Heart left ventricle (tissue), 16 donors: ENCODE measurements at regions of chr5 and their contacts with region 1.

Region 1: DNA sequence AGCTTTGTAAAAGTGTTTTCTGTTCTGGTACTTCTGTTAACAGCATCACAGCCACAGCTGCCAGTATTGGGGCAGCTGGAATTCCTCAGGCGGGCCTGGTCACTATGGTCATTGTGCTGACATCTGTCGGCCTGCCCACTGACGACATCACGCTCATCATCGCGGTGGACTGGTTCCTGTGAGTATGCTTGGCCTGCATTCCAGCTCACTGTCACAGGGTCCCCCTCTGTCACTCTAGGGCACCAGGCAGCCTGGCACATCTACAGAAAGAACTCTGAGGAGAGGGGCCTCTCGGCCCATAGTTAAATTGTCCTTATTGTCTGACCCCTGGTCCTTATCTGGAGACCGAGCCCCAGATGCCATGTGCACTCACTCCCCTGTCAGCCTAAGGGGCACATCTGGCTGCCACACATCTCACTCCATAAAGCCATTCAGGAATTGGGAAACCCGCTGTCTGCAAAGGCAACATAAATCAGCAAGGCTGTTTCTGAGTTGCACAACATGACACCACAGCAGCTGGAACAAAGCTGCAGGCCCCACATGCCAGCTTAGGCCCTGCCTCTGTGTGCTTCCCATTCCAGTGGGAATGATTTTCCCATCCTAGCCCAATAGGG is 77.5 kb downstream of the SLC1A3 start:
- DNase-seq: peak in 3 of 5 donors; percentile 41 to 86 (median 79)
- ATAC-seq: peak; percentile 28 to 77 (median 70)
- H3K4me3 ChIP-seq: no peak overlapping the region
- H3K27ac ChIP-seq: peak overlapping the region in 11 of 12 donors; percentile 15 to 61 (median 45)
- H3K4me1 ChIP-seq: peaks cover 0 to 77% (median 9%) of the 10 kb centered on the region in 12 donors
- H3K27me3 ChIP-seq: no peaks in the 10 kb centered on the region
- CTCF ChIP-seq: no peak
- POLR2A ChIP-seq: no peak

Region 2: GRCh38 chr5:36521838-36522745 is 161.8 kb before region 1 on chr5:
- intact Hi-C with region 1: loop called in 2 of 10 experiments (anchors 5 to 10 kb)
- DNase-seq: peak in 4 of 5 donors; percentile 28 to 48 (median 41)
- ATAC-seq: peak; percentile 92 to 95 (median 93)
- H3K4me3 ChIP-seq: no peak overlapping the region
- H3K27ac ChIP-seq: peak overlapping the region in 11 of 12 donors; percentile 57 to 92 (median 76)
- H3K4me1 ChIP-seq: peaks cover 0 to 26% (median 7%) of the 10 kb centered on the region in 12 donors
- H3K27me3 ChIP-seq: no peaks in the 10 kb centered on the region
- CTCF ChIP-seq: no peak
- POLR2A ChIP-seq: no peak

Region 3: GRCh38 chr5:37075399-37075950 is 391.5 kb after region 1 on chr5:
- intact Hi-C with region 1: no loop called
- DNase-seq: no peak
- ATAC-seq: no peak
- H3K4me3 ChIP-seq: no peak overlapping the region
- H3K27ac ChIP-seq: no peak overlapping the region
- H3K4me1 ChIP-seq: peaks cover 0 to 6% (median 0%) of the 10 kb centered on the region in 12 donors
- H3K27me3 ChIP-seq: no peaks in the 10 kb centered on the region
- CTCF ChIP-seq: no peak
- POLR2A ChIP-seq: no peak